ENCODE measurements at regions of chr3 and their contacts with region 1.

Region 1: DNA sequence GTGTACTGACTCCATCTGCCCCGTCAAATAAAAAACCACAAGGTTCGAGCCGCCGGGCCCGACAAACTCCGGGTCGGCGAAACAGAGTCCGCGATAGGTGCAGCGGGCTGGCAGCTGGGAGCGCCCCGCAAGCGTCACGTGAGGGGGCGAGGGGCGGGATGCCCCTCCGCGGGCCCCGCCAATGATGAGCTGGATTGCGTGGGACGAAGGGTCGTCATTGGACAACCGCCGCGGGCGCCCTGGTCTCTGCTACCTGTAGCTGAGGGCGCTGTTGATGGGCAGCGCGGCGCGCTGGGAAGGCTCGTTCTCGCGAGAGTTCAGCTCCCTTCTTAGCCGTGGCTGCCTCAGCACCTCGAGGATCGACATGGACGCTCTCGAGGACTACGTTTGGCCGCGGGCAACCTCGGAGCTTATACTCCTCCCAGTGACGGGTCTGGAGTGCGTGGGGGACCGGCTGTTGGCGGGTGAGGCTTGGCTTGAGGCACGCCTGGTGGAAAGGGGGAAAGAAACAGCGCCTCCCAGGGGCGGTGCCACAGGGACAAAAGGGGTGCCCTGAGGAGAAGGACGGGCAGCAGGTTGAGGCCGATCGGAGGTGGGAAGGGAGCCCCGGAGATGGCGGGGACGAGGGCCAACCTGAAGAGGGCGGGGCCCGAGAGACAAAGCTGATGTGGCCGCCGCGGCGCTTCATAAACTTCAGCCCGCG is at the start of gene WDR6:
- DNase-seq: peak; percentile 91
- ATAC-seq: peak; percentile 89
- H3K4me3 Mint-ChIP-seq: peak within 1 kb of the TSS; percentile 100
- H3K27ac Mint-ChIP-seq: peak within 1 kb of the TSS; percentile 99
- H3K4me1 Mint-ChIP-seq: peaks cover 21% of the 10 kb centered on the region
- H3K27me3 Mint-ChIP-seq: no peaks in the 10 kb centered on the region
- CTCF ChIP-seq: no peak
- total RNA-seq, gene WDR6: 205 and 250 TPM in 2 replicates

Region 2: DNA sequence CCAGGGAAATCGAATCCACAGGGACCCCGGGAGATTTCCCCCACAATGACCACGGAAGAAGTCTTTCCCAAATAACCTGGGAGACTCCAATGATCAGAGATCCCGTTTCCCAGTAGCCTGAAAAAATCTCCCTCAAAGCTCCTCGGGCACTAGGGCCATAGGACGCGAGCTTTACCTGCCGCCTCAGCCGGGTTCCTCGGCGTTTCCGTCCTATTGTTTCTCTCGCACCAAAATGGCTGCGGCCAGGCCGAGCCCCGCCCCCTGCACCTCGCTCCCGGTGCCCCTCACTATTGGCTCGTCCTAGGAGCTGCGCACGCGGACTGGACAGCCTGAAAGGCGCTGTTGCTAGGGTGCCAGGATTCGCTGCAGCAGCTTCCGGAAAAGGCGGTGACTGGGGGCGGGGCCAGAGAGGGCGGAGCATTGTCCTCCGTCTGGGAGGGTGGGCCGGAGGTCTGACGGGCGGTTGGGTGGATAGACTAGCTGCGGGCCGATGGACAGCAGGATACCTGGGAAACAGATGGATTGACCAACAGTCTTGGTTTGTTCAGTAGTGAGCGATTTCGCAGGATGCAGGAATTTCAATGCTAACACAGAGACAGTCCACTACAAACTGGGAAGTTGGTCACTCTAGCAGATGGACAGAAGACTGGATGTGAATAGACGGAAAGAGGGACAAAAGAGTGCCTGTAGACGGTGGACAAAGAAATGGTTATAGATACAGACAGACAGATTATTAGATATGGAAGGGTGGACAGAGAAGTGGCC is 290.1 kb before region 1 on chr3 and contains the start of gene IP6K2:
- CTCF ChIA-PET with region 1: no interaction called
- POLR2A ChIA-PET with region 1: interaction called, 4 read pairs
- intact Hi-C with region 1: loop called (anchors 1 kb)
- DNase-seq: peak; percentile 98
- ATAC-seq: peak; percentile 99
- H3K4me3 Mint-ChIP-seq: peak within 1 kb of the TSS; percentile 98
- H3K27ac Mint-ChIP-seq: peak within 1 kb of the TSS; percentile 94
- H3K4me1 Mint-ChIP-seq: peaks cover 37% of the 10 kb centered on the region
- H3K27me3 Mint-ChIP-seq: peaks cover 4% of the 10 kb centered on the region
- CTCF ChIP-seq: no peak
- total RNA-seq, gene IP6K2: 83.2 and 94.1 TPM in 2 replicates

Region 3: GRCh38 chr3:48918388-48919214 is 88.6 kb before region 1 on chr3 and contains the start of gene ARIH2:
- CTCF ChIA-PET with region 1: interaction called, 3 read pairs
- POLR2A ChIA-PET with region 1: interaction called, 11 read pairs
- intact Hi-C with region 1: no loop called
- DNase-seq: peak; percentile 91
- ATAC-seq: peak; percentile 85
- H3K4me3 Mint-ChIP-seq: peak within 1 kb of the TSS; percentile 99
- H3K27ac Mint-ChIP-seq: peak within 1 kb of the TSS; percentile 98
- H3K4me1 Mint-ChIP-seq: peaks cover 32% of the 10 kb centered on the region
- H3K27me3 Mint-ChIP-seq: no peaks in the 10 kb centered on the region
- CTCF ChIP-seq: no peak
- total RNA-seq, gene ARIH2: 96.6 and 112 TPM in 2 replicates

Region 4: DNA sequence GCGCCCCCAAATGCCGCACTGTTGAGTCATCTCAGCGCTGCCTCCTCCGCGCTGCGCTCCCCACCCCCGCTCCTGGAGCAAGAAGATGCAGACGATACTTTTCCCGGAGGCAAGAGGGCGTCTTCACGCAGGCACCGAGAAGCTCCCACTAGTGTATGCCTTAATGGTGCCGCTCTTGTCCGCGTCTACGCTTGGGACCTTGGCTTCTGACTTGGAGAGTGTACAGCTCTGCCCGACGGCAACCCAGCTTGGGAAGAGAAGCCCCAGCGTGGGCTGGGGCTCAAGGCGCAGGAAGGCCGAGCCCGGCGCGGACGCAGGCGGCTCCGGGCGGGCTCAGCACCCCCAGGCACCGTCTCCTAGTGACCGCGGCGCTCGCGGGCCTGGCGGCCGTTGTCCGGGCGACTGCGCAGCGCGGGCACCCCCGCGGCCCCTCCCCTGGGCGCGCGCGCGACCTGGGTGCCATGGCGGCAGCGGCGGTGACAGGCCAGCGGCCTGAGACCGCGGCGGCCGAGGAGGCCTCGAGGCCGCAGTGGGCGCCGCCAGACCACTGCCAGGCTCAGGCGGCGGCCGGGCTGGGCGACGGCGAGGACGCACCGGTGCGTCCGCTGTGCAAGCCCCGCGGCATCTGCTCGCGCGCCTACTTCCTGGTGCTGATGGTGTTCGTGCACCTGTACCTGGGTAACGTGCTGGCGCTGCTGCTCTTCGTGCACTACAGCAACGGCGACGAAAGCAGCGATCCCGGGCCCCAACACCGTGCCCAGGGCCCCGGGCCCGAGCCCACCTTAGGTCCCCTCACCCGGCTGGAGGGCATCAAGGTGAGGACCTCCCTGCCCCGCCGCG is 17.2 kb before region 1 on chr3 and contains the start of gene P4HTM:
- CTCF ChIA-PET with region 1: interaction called, 57 read pairs
- POLR2A ChIA-PET with region 1: interaction called, 58 read pairs
- intact Hi-C with region 1: loop called (anchors 1 kb)
- DNase-seq: peak; percentile 58
- ATAC-seq: peak; percentile 64
- H3K4me3 Mint-ChIP-seq: peak within 1 kb of the TSS; percentile 92
- H3K27ac Mint-ChIP-seq: peak within 1 kb of the TSS; percentile 83
- H3K4me1 Mint-ChIP-seq: peaks cover 28% of the 10 kb centered on the region
- H3K27me3 Mint-ChIP-seq: no peaks in the 10 kb centered on the region
- CTCF ChIP-seq: no peak
- total RNA-seq, gene P4HTM: 26.0 and 34.4 TPM in 2 replicates

Region 5: GRCh38 chr3:49028673-49029562 is 21.7 kb after region 1 on chr3 and contains the start of gene IMPDH2:
- CTCF ChIA-PET with region 1: interaction called, 4 read pairs
- POLR2A ChIA-PET with region 1: interaction called, 372 read pairs
- intact Hi-C with region 1: loop called (anchors 1 kb)
- DNase-seq: peak; percentile 91
- ATAC-seq: peak; percentile 90
- H3K4me3 Mint-ChIP-seq: peak within 1 kb of the TSS; percentile 93
- H3K27ac Mint-ChIP-seq: peak within 1 kb of the TSS; percentile 94
- H3K4me1 Mint-ChIP-seq: peaks cover 49% of the 10 kb centered on the region
- H3K27me3 Mint-ChIP-seq: no peaks in the 10 kb centered on the region
- CTCF ChIP-seq: no peak
- total RNA-seq, gene IMPDH2: 387 and 414 TPM in 2 replicates

Region 6: GRCh38 chr3:49112262-49112661 is 105.0 kb after region 1 on chr3:
- CTCF ChIA-PET with region 1: no interaction called
- POLR2A ChIA-PET with region 1: no interaction called
- intact Hi-C with region 1: no loop called
- DNase-seq: no peak
- ATAC-seq: no peak
- H3K4me3 Mint-ChIP-seq: no peak overlapping the region
- H3K27ac Mint-ChIP-seq: no peak overlapping the region
- H3K4me1 Mint-ChIP-seq: no peaks in the 10 kb centered on the region
- H3K27me3 Mint-ChIP-seq: no peaks in the 10 kb centered on the region
- CTCF ChIP-seq: no peak

Region 7: GRCh38 chr3:49313896-49314688 is 306.9 kb after region 1 on chr3:
- CTCF ChIA-PET with region 1: no interaction called
- POLR2A ChIA-PET with region 1: no interaction called
- intact Hi-C with region 1: no loop called
- DNase-seq: no peak
- ATAC-seq: no peak
- H3K4me3 Mint-ChIP-seq: no peak overlapping the region
- H3K27ac Mint-ChIP-seq: no peak overlapping the region
- H3K4me1 Mint-ChIP-seq: no peaks in the 10 kb centered on the region
- H3K27me3 Mint-ChIP-seq: no peaks in the 10 kb centered on the region
- CTCF ChIP-seq: no peak

Region 8: GRCh38 chr3:49582177-49582576 is 575.0 kb after region 1 on chr3:
- CTCF ChIA-PET with region 1: no interaction called
- POLR2A ChIA-PET with region 1: no interaction called
- intact Hi-C with region 1: no loop called
- DNase-seq: no peak
- ATAC-seq: no peak
- H3K4me3 Mint-ChIP-seq: no peak overlapping the region
- H3K27ac Mint-ChIP-seq: no peak overlapping the region
- H3K4me1 Mint-ChIP-seq: no peaks in the 10 kb centered on the region
- H3K27me3 Mint-ChIP-seq: peaks cover 7% of the 10 kb centered on the region
- CTCF ChIP-seq: no peak